Activated CD4-positive, alpha-beta T cell treated with anti-CD3 and anti-CD28 coated beads for 36 hours (primary cell): ENCODE measurements at regions of chr2 and their contacts with region 1.

Region 1: DNA sequence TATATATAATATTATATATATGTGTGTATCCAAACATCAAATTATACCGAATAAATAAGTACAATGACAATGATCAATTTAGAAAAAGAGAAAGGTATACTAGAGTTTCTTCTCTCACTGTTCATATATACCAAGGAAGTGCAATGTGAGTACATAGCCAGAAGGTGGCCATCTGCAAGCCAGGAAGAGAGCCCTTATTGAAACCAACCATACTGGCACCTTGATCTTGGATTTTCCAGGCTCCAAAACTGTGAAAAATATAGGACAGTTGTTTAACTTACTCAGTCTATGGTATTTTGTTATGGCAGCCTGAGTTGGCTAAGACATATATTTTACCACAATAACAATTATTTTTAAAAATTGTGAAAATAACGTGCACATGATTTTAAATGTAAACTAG is 1490.2 kb upstream of the SLC39A10 start:
- DNase-seq: peak; percentile 16
- ATAC-seq: no peak
- H3K4me3 Mint-ChIP-seq: no peak overlapping the region
- H3K27ac Mint-ChIP-seq: no peak overlapping the region
- H3K4me1 Mint-ChIP-seq: no peaks in the 10 kb centered on the region
- H3K27me3 Mint-ChIP-seq: no peaks in the 10 kb centered on the region

Region 2: DNA sequence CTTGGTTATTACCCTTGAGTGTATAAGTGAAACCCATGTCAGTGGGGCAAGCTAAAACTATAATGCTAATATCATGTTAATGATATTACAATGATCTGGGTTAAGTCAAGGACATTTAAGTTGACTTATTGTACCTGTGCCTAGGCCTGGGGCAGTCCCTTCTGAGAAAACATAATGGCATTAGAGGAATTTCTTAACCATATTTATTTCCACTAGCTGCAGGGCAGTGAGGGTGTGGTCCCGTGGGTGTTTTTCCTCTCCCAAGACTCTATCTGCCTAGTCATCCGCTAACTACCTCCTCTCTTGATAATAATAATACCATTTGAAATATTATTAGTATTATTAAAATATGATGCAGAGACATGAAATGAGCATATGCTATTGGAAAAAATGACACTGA is 18.0 kb before region 1 on chr2:
- CTCF ChIA-PET with region 1: no interaction called
- POLR2A ChIA-PET with region 1: no interaction called
- intact Hi-C with region 1: no loop called
- DNase-seq: no peak
- ATAC-seq: no peak
- H3K4me3 Mint-ChIP-seq: no peak overlapping the region
- H3K27ac Mint-ChIP-seq: no peak overlapping the region
- H3K4me1 Mint-ChIP-seq: no peaks in the 10 kb centered on the region
- H3K27me3 Mint-ChIP-seq: no peaks in the 10 kb centered on the region

Region 3: GRCh38 chr2:194867328-194867727 is 700.5 kb after region 1 on chr2:
- CTCF ChIA-PET with region 1: no interaction called
- POLR2A ChIA-PET with region 1: no interaction called
- intact Hi-C with region 1: loop called in 1 of 2 experiments (anchors 10 kb)
- DNase-seq: no peak
- ATAC-seq: peak; percentile 23
- H3K4me3 Mint-ChIP-seq: no peak overlapping the region
- H3K27ac Mint-ChIP-seq: no peak overlapping the region
- H3K4me1 Mint-ChIP-seq: no peaks in the 10 kb centered on the region
- H3K27me3 Mint-ChIP-seq: no peaks in the 10 kb centered on the region

Region 4: DNA sequence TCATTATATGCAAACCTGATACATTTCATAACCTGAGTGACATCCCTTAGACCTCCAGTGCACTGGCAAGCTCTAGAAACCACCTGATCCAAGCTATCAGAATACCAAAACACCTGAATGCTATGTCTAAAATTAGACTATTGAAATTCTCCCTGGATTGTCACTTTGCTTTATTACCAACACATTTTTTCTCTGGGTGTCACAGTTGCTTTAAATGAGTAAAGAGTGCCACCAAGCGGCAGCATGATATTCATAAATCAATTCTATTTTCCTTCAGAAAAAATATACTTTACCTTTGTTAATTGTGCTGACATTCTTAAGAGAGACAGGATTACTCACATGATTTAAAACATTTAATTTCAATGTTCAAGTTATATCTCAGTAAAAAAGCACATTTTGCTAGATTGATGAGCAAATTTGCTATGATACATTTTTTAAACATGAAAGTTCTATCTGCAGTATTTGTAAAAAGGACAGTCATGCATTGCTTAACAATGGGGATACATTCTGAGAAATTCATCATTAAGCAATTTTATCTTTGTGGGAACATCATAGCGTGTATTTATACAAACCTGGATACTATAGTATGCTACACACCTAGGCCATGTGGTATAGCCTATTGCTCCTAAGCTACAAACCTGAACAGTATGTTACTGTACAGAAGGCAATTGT is 1151.8 kb after region 1 on chr2:
- CTCF ChIA-PET with region 1: no interaction called
- POLR2A ChIA-PET with region 1: no interaction called
- intact Hi-C with region 1: loop called (anchors 2 to 5 kb)
- DNase-seq: peak; percentile 60
- ATAC-seq: peak; percentile 57
- H3K4me3 Mint-ChIP-seq: no peak overlapping the region
- H3K27ac Mint-ChIP-seq: no peak overlapping the region
- H3K4me1 Mint-ChIP-seq: peaks cover 10% of the 10 kb centered on the region
- H3K27me3 Mint-ChIP-seq: no peaks in the 10 kb centered on the region

Region 5: GRCh38 chr2:195930082-195930481 is 1763.3 kb after region 1 on chr2:
- CTCF ChIA-PET with region 1: no interaction called
- POLR2A ChIA-PET with region 1: no interaction called
- intact Hi-C with region 1: loop called in 1 of 2 experiments (anchors 10 kb)
- DNase-seq: no peak
- ATAC-seq: no peak
- H3K4me3 Mint-ChIP-seq: no peak overlapping the region
- H3K27ac Mint-ChIP-seq: no peak overlapping the region
- H3K4me1 Mint-ChIP-seq: no peaks in the 10 kb centered on the region
- H3K27me3 Mint-ChIP-seq: peaks cover 7% of the 10 kb centered on the region